HepG2 (cell line): ENCODE measurements at regions of chr11 and their contacts with region 1.

Region 1: DNA sequence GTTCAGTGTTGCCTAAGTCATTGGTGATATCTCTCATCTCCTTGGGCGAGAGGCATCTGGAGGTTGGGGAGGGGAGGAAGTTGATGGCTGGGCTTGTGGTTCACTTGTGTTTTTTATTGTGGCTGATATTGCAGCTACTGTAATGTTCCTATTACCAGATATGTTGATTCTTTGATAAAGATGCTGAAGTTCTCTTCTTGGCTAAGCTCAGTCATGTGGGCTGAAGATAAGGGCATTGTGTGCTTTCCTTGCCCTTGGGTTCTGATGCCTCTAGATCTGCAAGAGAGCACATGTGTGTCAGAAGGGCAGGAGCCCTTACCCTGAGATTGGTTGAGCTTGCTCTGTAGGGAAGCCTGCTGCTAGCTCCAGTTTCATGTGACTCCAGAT is 12.0 kb downstream of the STX3 start:
- DNase-seq: no peak
- ATAC-seq: no peak
- H3K4me3 ChIP-seq: no peak overlapping the region
- H3K27ac ChIP-seq: no peak overlapping the region
- H3K4me1 ChIP-seq: no peaks in the 10 kb centered on the region
- H3K27me3 ChIP-seq: no peaks in the 10 kb centered on the region
- CTCF ChIP-seq: no peak
- EP300 ChIP-seq: no peak
- POLR2A ChIP-seq: no peak
- RAD21 ChIP-seq: no peak

Region 2: GRCh38 chr11:59782080-59782479 is 14.9 kb after region 1 on chr11:
- CTCF ChIA-PET with region 1: no interaction called
- POLR2A ChIA-PET with region 1: no interaction called
- in situ Hi-C with region 1: no loop called
- intact Hi-C with region 1: loop called (anchors 1 kb)
- DNase-seq: no peak
- ATAC-seq: no peak
- H3K4me3 ChIP-seq: no peak overlapping the region
- H3K27ac ChIP-seq: no peak overlapping the region
- H3K4me1 ChIP-seq: peaks cover 25% of the 10 kb centered on the region
- H3K27me3 ChIP-seq: no peaks in the 10 kb centered on the region
- CTCF ChIP-seq: no peak
- EP300 ChIP-seq: no peak
- POLR2A ChIP-seq: no peak
- RAD21 ChIP-seq: no peak

Region 3: GRCh38 chr11:59866397-59866796 is 99.2 kb after region 1 on chr11 and contains the start of gene TCN1:
- CTCF ChIA-PET with region 1: no interaction called
- POLR2A ChIA-PET with region 1: no interaction called
- in situ Hi-C with region 1: no loop called
- intact Hi-C with region 1: no loop called
- DNase-seq: no peak
- ATAC-seq: no peak
- H3K4me3 ChIP-seq: no peak within 1 kb of the TSS
- H3K27ac ChIP-seq: no peak within 1 kb of the TSS
- H3K4me1 ChIP-seq: no peaks in the 10 kb centered on the region
- H3K27me3 ChIP-seq: no peaks in the 10 kb centered on the region
- CTCF ChIP-seq: no peak
- EP300 ChIP-seq: no peak
- POLR2A ChIP-seq: no peak
- RAD21 ChIP-seq: no peak
- total RNA-seq, gene TCN1: not detected in 2 replicates